Common myeloid progenitor, CD34-positive (primary cell): ENCODE measurements at regions of chr16 and their contacts with region 1.

Region 1: DNA sequence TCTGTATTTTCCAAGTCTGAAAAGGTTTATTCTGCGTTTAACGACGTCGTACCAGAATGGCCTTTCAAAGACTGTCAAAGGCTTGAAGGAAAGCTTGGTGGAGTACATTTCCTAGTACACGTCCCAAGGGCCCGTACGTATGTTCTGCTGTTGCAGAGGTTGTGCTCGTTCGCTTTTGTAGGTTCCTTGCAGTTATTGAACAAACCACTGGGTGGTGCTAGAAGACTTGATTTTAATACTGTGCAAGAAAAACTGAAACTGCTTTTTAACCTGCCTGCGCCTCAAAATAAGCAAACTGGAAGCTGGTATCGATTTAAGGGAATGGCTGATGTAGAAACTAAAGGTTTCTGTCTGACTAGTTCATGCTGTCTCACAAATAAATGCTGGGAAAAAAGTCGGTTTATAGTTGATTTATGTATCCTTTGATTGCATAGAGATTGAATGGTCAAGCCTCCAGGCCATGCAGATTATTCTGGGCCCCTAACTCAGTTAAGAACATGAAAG is 54.6 kb downstream of the USP10 start:
- DNase-seq: peak; percentile 88 to 93 (median 91)
- H3K4me3 ChIP-seq: peak overlapping the region in 2 of 7 experiments; percentile 34 to 43
- H3K27ac ChIP-seq: no peak overlapping the region
- H3K4me1 ChIP-seq: peaks cover 37 to 68% (median 49%) of the 10 kb centered on the region in 4 experiments
- H3K27me3 ChIP-seq: no peaks in the 10 kb centered on the region

Region 2: DNA sequence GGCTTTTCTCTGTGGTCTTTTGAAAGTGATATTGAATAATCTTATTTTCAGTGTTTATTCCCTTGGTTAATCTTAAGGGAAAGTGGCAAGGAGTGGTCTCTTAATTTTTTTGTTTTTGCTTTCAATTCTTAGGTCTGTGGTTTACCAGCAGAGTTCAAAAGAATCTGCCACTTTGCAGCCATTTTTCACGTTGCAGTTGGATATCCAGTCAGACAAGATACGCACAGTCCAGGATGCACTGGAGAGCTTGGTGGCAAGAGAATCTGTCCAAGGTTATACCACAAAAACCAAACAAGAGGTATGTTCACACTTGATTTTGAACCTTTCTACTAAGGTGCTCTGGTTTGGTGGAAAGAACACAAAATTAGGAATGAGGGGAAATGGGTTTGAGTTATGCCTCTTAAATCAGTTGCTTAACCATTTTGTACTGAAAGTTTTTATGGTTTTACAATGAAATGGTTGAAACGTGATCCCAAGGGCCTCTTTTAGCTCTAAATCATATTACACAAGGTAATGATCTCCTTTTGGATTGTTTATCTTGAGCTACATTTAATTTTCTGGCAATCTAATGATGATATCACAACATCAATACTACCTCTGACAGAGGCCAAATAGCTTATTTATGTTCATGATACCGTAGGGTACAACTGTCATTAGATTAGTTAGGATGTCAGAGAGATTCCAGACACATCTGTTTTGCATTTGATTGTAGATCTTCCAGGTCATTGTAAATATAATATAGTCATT is 13.8 kb after region 1 on chr16:
- CTCF ChIA-PET with region 1: interaction called, 12 read pairs
- POLR2A ChIA-PET with region 1: no interaction called
- DNase-seq: no peak
- H3K4me3 ChIP-seq: no peak overlapping the region
- H3K27ac ChIP-seq: no peak overlapping the region
- H3K4me1 ChIP-seq: no peaks in the 10 kb centered on the region
- H3K27me3 ChIP-seq: no peaks in the 10 kb centered on the region

Region 3: DNA sequence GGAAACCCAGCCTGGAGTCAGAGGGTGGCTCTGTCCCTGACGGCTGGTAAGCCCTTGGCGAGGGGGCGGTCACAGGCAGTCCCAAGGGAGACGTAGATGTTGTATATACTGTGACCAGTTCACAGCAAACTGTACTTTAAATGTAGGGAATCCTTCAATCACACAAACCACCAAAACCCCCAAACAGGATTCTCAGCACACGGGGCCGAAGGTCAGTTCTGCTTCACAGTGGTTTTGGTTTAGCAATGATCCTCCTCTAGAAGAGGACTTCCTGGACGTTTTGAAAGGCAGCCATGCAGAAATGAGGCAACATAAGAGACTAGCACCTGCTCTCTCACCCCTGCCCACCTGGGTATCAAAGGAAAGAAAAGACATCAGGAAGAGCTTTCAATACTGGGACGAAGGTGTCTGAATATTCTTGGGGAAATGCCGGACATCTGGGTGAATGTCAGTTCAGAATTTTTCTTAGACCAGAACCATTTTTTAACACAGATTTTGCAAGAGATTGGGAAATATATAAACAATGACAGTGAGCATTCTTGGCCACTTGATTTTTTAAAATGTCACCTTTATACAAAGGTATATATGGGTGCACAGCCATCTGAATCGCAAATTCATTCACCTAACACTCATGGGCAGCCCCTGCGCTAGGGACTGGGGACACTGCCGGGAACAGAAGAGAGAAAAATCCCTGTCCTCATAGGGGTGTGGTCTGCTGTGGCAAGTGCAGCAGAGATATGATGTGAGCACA is 139.6 kb after region 1 on chr16:
- CTCF ChIA-PET with region 1: no interaction called
- POLR2A ChIA-PET with region 1: no interaction called
- DNase-seq: no peak
- H3K4me3 ChIP-seq: no peak overlapping the region
- H3K27ac ChIP-seq: no peak overlapping the region
- H3K4me1 ChIP-seq: peaks cover 0 to 3% (median 0%) of the 10 kb centered on the region in 4 experiments
- H3K27me3 ChIP-seq: peaks cover 0 to 15% (median 4%) of the 10 kb centered on the region in 5 experiments

Region 4: DNA sequence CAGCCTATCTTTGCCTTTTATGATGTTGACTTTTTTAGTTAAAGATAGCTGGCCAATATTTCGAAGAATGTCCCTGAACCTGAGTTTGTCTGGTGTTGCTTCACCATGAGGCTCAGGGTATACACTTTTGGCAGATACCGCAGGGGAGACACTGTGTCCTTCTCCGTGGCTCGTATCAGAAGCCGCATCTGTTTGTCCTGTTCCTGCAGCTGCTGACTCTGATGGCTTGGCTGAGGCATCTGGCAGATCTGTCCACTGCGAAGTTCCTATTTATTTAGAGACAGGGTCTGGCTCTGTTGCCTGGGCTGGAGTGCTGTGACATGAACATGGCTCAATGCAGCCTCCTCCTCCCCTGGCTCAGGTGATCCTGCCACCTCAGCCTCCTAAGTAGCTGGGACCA is 158.9 kb after region 1 on chr16:
- CTCF ChIA-PET with region 1: interaction called, 10 read pairs
- POLR2A ChIA-PET with region 1: no interaction called
- DNase-seq: peak; percentile 78 to 96 (median 93)
- H3K4me3 ChIP-seq: no peak overlapping the region
- H3K27ac ChIP-seq: no peak overlapping the region
- H3K4me1 ChIP-seq: peaks cover 0 to 13% (median 4%) of the 10 kb centered on the region in 4 experiments
- H3K27me3 ChIP-seq: peaks cover 0 to 19% (median 8%) of the 10 kb centered on the region in 5 experiments

Region 5: DNA sequence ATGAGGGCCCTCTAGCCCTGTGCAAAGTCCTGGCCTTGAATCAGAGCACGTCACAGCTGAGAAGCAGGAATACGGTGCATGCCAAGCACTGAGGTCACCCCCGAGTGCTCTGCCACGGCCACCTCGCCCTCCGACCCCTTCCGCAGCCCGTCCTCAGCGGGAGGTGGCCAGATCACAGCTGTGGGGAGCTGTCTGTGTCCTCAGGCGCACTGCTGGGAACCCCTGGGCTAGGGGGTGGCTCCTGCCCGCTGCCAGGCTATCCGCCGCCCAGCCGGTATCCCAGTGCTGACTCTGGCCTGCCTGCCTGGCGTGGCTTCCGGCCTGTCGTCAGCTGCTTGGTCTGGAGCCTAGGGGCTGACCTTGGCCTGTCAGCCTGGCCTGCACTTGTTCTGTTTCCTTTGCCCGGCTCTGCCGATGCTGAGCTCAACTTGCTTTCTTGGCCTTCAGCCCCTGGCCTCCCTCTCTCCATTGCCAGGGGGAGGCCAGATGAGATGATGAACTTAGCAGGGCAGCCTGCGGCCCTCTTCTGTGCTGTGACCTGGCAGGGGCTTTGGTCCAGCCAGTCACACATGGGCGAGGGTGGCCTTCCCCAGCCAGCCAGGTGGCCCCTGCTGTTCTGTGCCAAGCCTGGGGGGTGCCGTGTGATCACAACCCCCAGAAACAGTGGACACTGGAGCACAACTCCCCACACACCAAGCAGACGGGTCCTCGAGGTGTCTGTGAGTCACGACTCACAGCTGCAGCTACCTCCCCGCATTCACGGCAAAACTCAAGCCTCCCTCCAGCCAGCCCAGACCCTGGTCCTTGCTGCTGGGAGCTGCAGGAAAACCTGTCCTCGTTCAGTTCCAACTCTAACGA is 179.6 kb after region 1 on chr16:
- CTCF ChIA-PET with region 1: interaction called, 13 read pairs
- POLR2A ChIA-PET with region 1: interaction called, 3 read pairs
- DNase-seq: no peak
- H3K4me3 ChIP-seq: no peak overlapping the region
- H3K27ac ChIP-seq: no peak overlapping the region
- H3K4me1 ChIP-seq: no peaks in the 10 kb centered on the region
- H3K27me3 ChIP-seq: peaks cover 0 to 31% (median 0%) of the 10 kb centered on the region in 5 experiments

Region 6: GRCh38 chr16:84947022-84947421 is 192.6 kb after region 1 on chr16:
- CTCF ChIA-PET with region 1: interaction called, 116 read pairs
- POLR2A ChIA-PET with region 1: interaction called, 3 read pairs
- DNase-seq: peak; percentile 81 to 93 (median 92)
- H3K4me3 ChIP-seq: peak overlapping the region in 1 of 7 experiments; percentile 6
- H3K27ac ChIP-seq: no peak overlapping the region
- H3K4me1 ChIP-seq: peaks cover 0 to 40% (median 26%) of the 10 kb centered on the region in 4 experiments
- H3K27me3 ChIP-seq: peaks cover 0 to 44% (median 12%) of the 10 kb centered on the region in 5 experiments

Region 7: DNA sequence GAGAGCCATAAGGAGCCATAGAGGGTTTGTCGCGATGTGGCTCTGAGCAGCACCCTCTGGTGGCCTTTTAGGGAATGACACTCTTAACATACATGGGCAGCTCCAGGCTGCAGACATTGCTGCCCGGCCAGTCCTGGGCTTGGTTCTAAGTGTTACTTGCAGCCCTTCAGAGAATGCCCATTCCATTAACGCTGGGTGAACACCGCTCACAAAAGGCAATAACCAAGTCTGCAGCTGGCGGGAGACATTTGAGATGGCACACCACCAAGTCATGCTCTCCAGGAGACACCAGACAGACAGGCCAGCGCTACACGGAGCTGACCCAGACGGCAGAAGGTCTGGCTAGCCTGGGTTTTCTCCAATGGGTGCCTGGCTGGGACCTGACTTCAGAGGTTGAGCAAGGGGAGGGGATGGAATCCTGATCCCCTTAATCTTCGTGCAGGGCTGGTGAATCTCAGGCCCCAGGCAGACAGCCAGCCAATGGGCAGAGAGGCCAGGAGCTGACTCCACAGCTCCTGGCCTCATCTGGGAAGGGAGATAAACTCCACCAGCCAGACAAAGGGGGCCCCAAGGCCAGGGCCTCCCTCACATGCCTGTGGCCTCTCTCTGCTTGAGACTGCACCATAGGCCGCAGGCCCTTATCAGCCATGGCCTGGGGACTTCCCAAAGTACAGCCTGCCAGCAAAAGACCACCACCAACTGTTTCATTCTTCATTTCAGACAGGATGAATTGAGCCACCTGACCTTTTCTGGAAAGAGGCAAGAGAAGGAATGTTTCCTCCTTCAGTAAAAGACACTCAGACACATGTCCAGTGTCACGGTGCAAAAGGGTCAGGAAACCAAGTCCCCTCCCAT is 198.2 kb after region 1 on chr16:
- CTCF ChIA-PET with region 1: interaction called, 116 read pairs
- POLR2A ChIA-PET with region 1: interaction called, 3 read pairs
- DNase-seq: peak; percentile 77 to 87 (median 81)
- H3K4me3 ChIP-seq: peak overlapping the region in 2 of 7 experiments; percentile 1 to 45
- H3K27ac ChIP-seq: peak overlapping the region in 1 of 2 experiments; percentile 27
- H3K4me1 ChIP-seq: peaks cover 11 to 41% (median 34%) of the 10 kb centered on the region in 4 experiments
- H3K27me3 ChIP-seq: peaks cover 0 to 20% (median 0%) of the 10 kb centered on the region in 5 experiments

Region 8: DNA sequence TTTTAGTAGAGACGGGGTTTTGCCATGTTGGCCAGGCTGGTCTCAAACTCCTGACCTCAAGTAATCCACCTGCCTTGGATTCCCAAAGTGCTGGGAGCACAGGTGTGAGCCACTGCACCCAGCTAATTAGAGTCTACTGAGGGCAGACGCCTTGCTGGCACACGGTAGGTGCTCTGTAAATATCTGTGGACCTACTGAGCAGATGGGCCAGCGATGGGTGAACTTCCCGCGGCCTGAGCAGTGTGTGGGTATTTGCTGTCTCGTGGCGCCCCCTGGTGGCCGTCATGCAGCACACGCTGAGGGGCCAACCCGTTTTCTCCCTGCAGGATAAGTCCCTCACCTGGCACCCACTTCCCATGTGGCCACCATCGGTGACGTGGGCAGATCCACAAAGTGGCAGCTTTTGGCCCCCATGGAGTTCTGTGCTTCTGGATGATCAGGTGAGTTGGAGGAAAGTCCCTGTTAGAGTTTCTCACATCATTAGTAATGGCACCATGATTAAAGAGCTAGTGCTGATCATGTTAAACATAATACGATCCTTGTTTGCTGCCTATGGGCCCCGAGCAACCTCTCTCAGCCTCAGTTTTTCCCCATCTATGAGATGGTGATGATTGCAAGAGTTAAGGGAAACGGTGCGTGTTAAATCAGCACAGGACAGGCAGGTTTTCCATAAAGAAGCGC is 216.2 kb after region 1 on chr16:
- CTCF ChIA-PET with region 1: interaction called, 145 read pairs
- POLR2A ChIA-PET with region 1: no interaction called
- DNase-seq: peak; percentile 80 to 88 (median 87)
- H3K4me3 ChIP-seq: no peak overlapping the region
- H3K27ac ChIP-seq: no peak overlapping the region
- H3K4me1 ChIP-seq: peaks cover 0 to 8% (median 2%) of the 10 kb centered on the region in 4 experiments
- H3K27me3 ChIP-seq: peaks cover 0 to 9% (median 2%) of the 10 kb centered on the region in 5 experiments